PC-3 (cell line): ENCODE measurements at regions of chr4 and their contacts with region 1.

Region 1: DNA sequence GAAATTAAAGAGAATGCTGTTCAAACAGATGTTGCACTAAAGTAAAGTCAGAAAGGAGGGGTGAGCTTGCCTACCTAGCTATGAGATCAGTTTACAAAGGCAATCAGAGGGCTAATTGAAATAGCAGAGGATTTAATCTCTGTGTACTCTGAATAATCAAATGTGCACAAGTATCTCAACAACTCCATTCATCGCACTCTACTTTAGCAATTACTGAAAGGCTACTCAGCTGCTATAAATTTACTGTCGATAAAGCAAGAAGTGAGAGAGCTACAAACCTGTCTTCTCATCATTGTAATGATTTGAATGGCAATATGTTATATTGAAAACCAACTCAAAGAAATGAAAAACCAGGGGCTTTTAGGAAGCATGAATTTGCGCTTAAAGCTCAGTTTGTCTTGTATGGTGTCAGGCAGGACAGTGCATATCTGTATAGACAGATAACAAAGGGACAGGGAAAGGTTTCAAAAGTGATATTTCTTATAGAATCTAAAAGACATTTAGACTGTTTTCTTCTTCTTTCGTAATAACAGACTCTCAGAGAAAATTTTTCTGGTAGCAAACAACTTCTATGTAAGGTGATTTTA is 34.8 kb downstream of the GC start:
- DNase-seq: no peak
- ATAC-seq: no peak
- H3K4me3 ChIP-seq: no peak overlapping the region
- H3K27ac ChIP-seq: no peak overlapping the region
- H3K4me1 ChIP-seq: no peaks in the 10 kb centered on the region
- H3K27me3 ChIP-seq: peaks cover 37% of the 10 kb centered on the region
- CTCF ChIP-seq: no peak

Region 2: DNA sequence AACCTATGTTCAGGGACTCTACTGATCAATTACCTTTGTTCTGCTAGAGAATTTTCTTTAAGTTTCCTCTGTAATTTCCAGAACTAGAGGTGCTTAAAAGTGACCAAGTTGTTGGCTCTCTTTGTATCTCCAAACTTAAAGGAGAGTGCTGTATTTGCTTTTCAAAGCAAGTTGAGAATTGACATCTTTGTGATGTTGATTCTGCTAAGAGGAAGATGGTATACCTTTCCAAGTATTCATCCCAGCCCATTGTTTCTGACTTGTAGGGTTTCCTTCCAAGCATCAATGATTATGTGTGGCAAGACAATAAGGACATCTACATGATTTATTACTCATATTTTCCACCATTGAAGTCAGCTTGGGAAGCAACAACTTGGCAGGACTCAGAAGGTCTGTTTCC is 155.8 kb before region 1 on chr4:
- CTCF ChIA-PET with region 1: no interaction called
- POLR2A ChIA-PET with region 1: no interaction called
- intact Hi-C with region 1: no loop called
- DNase-seq: no peak
- ATAC-seq: no peak
- H3K4me3 ChIP-seq: no peak overlapping the region
- H3K27ac ChIP-seq: no peak overlapping the region
- H3K4me1 ChIP-seq: no peaks in the 10 kb centered on the region
- H3K27me3 ChIP-seq: no peaks in the 10 kb centered on the region
- CTCF ChIP-seq: no peak

Region 3: GRCh38 chr4:72860766-72861165 is 1111.7 kb after region 1 on chr4:
- CTCF ChIA-PET with region 1: no interaction called
- POLR2A ChIA-PET with region 1: interaction called, 10 read pairs
- intact Hi-C with region 1: no loop called
- DNase-seq: no peak
- ATAC-seq: no peak
- H3K4me3 ChIP-seq: no peak overlapping the region
- H3K27ac ChIP-seq: no peak overlapping the region
- H3K4me1 ChIP-seq: peaks cover 12% of the 10 kb centered on the region
- H3K27me3 ChIP-seq: no peaks in the 10 kb centered on the region
- CTCF ChIP-seq: no peak